ENCODE measurements at regions of chr3 and their contacts with region 1.

Region 1: GRCh38 chr3:48635222-48636021 is at the start of gene SLC26A6:
- DNase-seq: peak; percentile 96
- ATAC-seq: peak; percentile 95
- H3K4me3 Mint-ChIP-seq: peak within 1 kb of the TSS; percentile 88
- H3K27ac Mint-ChIP-seq: peak within 1 kb of the TSS; percentile 87
- H3K4me1 Mint-ChIP-seq: peaks cover 21% of the 10 kb centered on the region
- H3K27me3 Mint-ChIP-seq: no peaks in the 10 kb centered on the region
- CTCF ChIP-seq: peak; percentile 71
- total RNA-seq, gene SLC26A6: 41.3 to 45.0 TPM

Region 2: DNA sequence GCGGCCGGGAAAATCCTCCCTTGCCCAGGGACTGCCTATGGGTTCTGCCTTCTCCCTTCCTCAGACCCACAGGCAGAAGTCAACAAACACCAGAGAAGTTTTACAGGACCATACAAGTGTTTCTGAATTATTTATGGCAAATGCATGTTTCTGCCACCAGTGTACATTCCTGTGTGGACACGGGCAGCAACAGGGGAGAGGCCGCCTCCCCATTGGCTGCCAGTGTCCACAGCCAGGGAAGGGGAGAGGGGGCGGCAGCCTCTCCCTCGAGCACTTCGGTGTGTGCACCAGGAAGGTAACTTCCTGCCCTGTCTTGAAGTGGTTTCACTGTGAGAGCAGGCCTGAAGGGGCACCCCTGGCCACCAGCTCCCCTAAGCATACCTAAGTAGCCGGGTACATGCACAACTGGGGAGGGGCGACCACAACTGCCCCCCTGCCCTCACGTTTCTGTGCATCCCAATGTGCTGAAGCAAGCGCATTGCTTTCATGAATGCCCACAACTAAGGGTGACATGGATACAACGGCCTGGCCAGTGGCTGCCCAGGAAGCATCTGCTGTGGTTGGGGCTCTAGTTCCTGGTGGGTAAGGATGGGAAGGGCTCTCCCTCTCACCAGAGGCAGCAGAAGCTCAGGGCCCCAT is 116.7 kb before region 1 on chr3:
- CTCF ChIA-PET with region 1: no interaction called
- POLR2A ChIA-PET with region 1: no interaction called
- intact Hi-C with region 1: no loop called
- DNase-seq: no peak
- ATAC-seq: peak; percentile 35
- H3K4me3 Mint-ChIP-seq: no peak overlapping the region
- H3K27ac Mint-ChIP-seq: peak overlapping the region; percentile 55
- H3K4me1 Mint-ChIP-seq: peaks cover 46% of the 10 kb centered on the region
- H3K27me3 Mint-ChIP-seq: no peaks in the 10 kb centered on the region
- CTCF ChIP-seq: no peak

Region 3: GRCh38 chr3:48556793-48557626 is 78.4 kb before region 1 on chr3 and contains the start of gene PFKFB4:
- CTCF ChIA-PET with region 1: interaction called, 46 read pairs
- POLR2A ChIA-PET with region 1: interaction called, 6 read pairs
- intact Hi-C with region 1: no loop called
- DNase-seq: peak; percentile 100
- ATAC-seq: peak; percentile 89
- H3K4me3 Mint-ChIP-seq: peak within 1 kb of the TSS; percentile 89
- H3K27ac Mint-ChIP-seq: peak within 1 kb of the TSS; percentile 93
- H3K4me1 Mint-ChIP-seq: peaks cover 34% of the 10 kb centered on the region
- H3K27me3 Mint-ChIP-seq: no peaks in the 10 kb centered on the region
- CTCF ChIP-seq: no peak
- total RNA-seq, gene PFKFB4: 90.8 to 94.0 TPM

Region 4: DNA sequence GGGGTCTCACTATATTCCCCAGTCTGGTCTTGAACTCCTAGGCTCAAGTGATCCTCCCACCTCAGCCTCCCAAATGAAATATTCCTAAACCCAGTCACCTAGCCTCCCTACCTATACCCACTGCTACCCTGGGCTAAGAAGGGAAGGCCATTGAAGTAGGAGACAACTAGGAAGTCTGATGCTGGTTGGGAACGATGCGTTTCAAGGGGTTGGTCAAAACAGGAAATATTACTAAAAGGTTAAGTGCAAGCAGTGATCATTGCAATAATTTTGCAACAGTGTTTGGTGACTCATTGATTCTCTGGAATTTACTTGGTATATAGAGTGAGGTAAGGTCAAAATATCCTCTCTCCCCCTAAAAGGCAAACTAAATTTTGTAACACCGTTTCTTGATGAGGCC is 21.4 kb before region 1 on chr3:
- CTCF ChIA-PET with region 1: interaction called, 13 read pairs
- POLR2A ChIA-PET with region 1: interaction called, 9 read pairs
- intact Hi-C with region 1: no loop called
- DNase-seq: peak; percentile 34
- ATAC-seq: peak; percentile 45
- H3K4me3 Mint-ChIP-seq: peak overlapping the region; percentile 10
- H3K27ac Mint-ChIP-seq: peak overlapping the region; percentile 93
- H3K4me1 Mint-ChIP-seq: peaks cover 14% of the 10 kb centered on the region
- H3K27me3 Mint-ChIP-seq: no peaks in the 10 kb centered on the region
- CTCF ChIP-seq: no peak

Region 5: GRCh38 chr3:48623851-48624547 is 11.4 kb before region 1 on chr3:
- CTCF ChIA-PET with region 1: interaction called, 42 read pairs
- POLR2A ChIA-PET with region 1: interaction called, 8 read pairs
- intact Hi-C with region 1: no loop called
- DNase-seq: no peak
- ATAC-seq: no peak
- H3K4me3 Mint-ChIP-seq: no peak overlapping the region
- H3K27ac Mint-ChIP-seq: no peak overlapping the region
- H3K4me1 Mint-ChIP-seq: peaks cover 4% of the 10 kb centered on the region
- H3K27me3 Mint-ChIP-seq: no peaks in the 10 kb centered on the region
- CTCF ChIP-seq: no peak

Region 6: GRCh38 chr3:48656061-48656840 is 20.8 kb after region 1 on chr3:
- CTCF ChIA-PET with region 1: interaction called, 22 read pairs
- POLR2A ChIA-PET with region 1: interaction called, 25 read pairs
- intact Hi-C with region 1: no loop called
- DNase-seq: peak; percentile 93
- ATAC-seq: peak; percentile 83
- H3K4me3 Mint-ChIP-seq: peak overlapping the region; percentile 80
- H3K27ac Mint-ChIP-seq: peak overlapping the region; percentile 93
- H3K4me1 Mint-ChIP-seq: peaks cover 14% of the 10 kb centered on the region
- H3K27me3 Mint-ChIP-seq: peaks cover 9% of the 10 kb centered on the region
- CTCF ChIP-seq: peak; percentile 78

Region 7: DNA sequence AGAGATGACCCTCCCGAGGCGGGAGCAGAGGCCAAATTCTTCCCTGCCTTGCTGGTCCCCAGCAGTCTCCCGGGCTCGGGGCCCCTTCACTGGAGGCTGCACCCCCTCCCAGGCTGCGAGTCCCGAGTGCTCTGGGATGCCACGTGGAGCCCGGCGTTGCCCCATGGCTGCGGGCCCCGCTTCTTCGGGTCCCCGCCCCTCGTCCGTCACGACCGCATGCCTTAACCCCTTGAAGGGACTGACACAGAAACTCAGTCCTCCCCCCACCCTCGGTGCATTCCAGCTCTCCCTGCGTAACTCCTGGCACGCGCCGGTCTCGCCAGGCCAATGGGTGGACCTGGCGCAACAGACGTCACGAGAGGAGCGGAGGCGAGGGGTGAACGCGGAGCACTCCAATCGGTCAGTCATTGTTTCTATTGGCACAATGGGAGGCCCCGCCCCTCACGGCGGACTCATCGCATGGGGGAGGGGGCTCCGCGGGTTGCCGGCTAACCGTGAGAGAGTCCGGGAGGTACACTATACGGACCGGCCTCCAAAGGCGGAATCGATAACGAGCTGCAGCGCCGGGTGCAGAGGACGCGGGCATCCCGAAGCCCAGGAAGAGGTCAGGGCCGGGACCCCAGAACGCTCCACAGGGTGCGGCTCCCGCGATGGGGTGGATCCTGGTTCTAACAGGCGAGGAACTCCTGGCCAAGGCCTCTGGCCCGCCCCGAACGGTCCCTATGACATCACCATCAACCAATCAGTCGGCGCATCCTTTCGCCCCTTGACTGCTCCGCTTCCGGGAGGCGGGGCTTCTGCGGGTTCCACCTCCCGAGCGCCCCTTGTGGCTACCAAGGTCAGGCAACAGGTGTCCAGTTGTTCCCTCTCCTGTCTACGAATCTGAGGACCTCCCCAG is 28.2 kb after region 1 on chr3:
- CTCF ChIA-PET with region 1: interaction called, 5 read pairs
- POLR2A ChIA-PET with region 1: interaction called, 11 read pairs
- intact Hi-C with region 1: no loop called
- DNase-seq: peak; percentile 97
- ATAC-seq: peak; percentile 87
- H3K4me3 Mint-ChIP-seq: peak overlapping the region; percentile 82
- H3K27ac Mint-ChIP-seq: peak overlapping the region; percentile 85
- H3K4me1 Mint-ChIP-seq: peaks cover 17% of the 10 kb centered on the region
- H3K27me3 Mint-ChIP-seq: peaks cover 21% of the 10 kb centered on the region
- CTCF ChIP-seq: peak; percentile 88

Region 8: GRCh38 chr3:48738926-48739616 is 103.6 kb after region 1 on chr3:
- CTCF ChIA-PET with region 1: no interaction called
- POLR2A ChIA-PET with region 1: no interaction called
- intact Hi-C with region 1: no loop called
- DNase-seq: no peak
- ATAC-seq: no peak
- H3K4me3 Mint-ChIP-seq: no peak overlapping the region
- H3K27ac Mint-ChIP-seq: no peak overlapping the region
- H3K4me1 Mint-ChIP-seq: peaks cover 2% of the 10 kb centered on the region
- H3K27me3 Mint-ChIP-seq: no peaks in the 10 kb centered on the region
- CTCF ChIP-seq: no peak

Measured in activated CD8-positive, alpha-beta T cell treated with anti-CD3 and anti-CD28 coated beads for 36 hours (primary cell).